Calu3 (cell line): ENCODE measurements at regions of chr1 and their contacts with region 1.

Region 1: GRCh38 chr1:168469690-168470089 is 74.1 kb downstream of the XCL2 start:
- DNase-seq: peak; percentile 62
- H3K4me3 Mint-ChIP-seq: no peak overlapping the region
- H3K27ac Mint-ChIP-seq: peak overlapping the region; percentile 15
- H3K4me1 Mint-ChIP-seq: peaks cover 69% of the 10 kb centered on the region
- H3K27me3 Mint-ChIP-seq: no peaks in the 10 kb centered on the region
- CTCF ChIP-seq: no peak

Region 2: GRCh38 chr1:168135116-168135920 is 334.4 kb before region 1 on chr1:
- CTCF ChIA-PET with region 1: no interaction called
- intact Hi-C with region 1: no loop called
- DNase-seq: no peak
- H3K4me3 Mint-ChIP-seq: peak overlapping the region; percentile 83
- H3K27ac Mint-ChIP-seq: no peak overlapping the region
- H3K4me1 Mint-ChIP-seq: peaks cover 9% of the 10 kb centered on the region
- H3K27me3 Mint-ChIP-seq: peaks cover 14% of the 10 kb centered on the region
- CTCF ChIP-seq: no peak

Region 3: GRCh38 chr1:168408536-168409242 is 61.0 kb before region 1 on chr1:
- CTCF ChIA-PET with region 1: no interaction called
- intact Hi-C with region 1: no loop called
- DNase-seq: peak; percentile 58
- H3K4me3 Mint-ChIP-seq: no peak overlapping the region
- H3K27ac Mint-ChIP-seq: peak overlapping the region; percentile 20
- H3K4me1 Mint-ChIP-seq: peaks cover 34% of the 10 kb centered on the region
- H3K27me3 Mint-ChIP-seq: no peaks in the 10 kb centered on the region
- CTCF ChIP-seq: no peak

Region 4: DNA sequence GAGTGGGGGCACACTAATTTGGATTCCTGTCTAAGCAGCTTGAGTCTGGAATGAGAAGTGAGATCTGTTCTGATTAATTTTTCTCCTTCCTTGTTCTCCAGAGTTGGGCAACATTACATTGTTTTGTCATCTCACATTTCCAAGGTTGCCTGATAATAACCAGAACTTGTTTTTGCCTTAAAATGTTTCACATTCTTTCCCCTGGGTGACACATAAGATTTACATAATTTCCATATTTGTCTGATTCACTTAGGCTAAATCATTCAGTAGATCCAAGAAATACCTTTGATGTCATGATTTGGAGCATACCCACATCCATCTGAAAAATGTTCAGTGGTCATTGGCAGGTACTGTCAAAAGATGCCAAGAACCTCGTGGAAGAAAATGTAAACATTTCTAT is 13.8 kb after region 1 on chr1:
- CTCF ChIA-PET with region 1: interaction called, 7 read pairs
- intact Hi-C with region 1: loop called (anchors 2 kb)
- DNase-seq: no peak
- H3K4me3 Mint-ChIP-seq: peak overlapping the region; percentile 27
- H3K27ac Mint-ChIP-seq: peak overlapping the region; percentile 77
- H3K4me1 Mint-ChIP-seq: peaks cover 28% of the 10 kb centered on the region
- H3K27me3 Mint-ChIP-seq: no peaks in the 10 kb centered on the region
- CTCF ChIP-seq: no peak

Region 5: DNA sequence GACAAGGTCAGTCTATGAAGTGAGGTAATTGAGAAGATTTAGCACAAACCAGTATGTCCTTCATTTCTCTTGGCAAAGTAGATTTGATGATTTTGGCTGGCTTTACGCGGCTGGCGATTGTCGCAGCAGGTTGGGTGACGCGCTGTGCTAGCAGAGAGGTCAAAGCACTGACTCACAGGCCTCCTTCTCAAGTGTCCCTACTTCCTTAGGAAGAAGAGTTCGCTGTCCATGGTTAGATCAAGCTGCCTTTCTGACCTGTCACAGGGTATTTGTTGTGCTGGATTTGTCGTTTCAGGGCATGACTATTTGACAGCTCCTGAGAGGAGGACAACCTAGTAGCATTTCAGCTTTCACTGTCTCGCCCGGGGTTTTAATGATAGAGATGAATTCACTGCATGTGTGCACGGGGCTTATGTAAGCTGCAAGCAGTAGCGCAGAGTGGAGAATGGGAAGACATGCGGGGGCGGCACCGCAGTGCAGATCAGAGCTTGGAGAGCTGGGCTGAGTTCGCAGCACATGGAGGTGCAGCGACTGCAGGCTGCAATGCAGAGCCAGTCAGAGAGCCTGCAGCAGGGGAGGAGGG is 139.5 kb after region 1 on chr1:
- CTCF ChIA-PET with region 1: no interaction called
- intact Hi-C with region 1: no loop called
- DNase-seq: no peak
- H3K4me3 Mint-ChIP-seq: no peak overlapping the region
- H3K27ac Mint-ChIP-seq: no peak overlapping the region
- H3K4me1 Mint-ChIP-seq: peaks cover 14% of the 10 kb centered on the region
- H3K27me3 Mint-ChIP-seq: no peaks in the 10 kb centered on the region
- CTCF ChIP-seq: no peak